ENCODE measurements at regions of chr3 and their contacts with region 1.

Region 1: GRCh38 chr3:62007036-62007818 is 366.1 kb downstream of the FEZF2 start:
- DNase-seq: no peak
- ATAC-seq: no peak
- H3K4me3 Mint-ChIP-seq: no peak overlapping the region
- H3K27ac Mint-ChIP-seq: no peak overlapping the region
- H3K4me1 Mint-ChIP-seq: no peaks in the 10 kb centered on the region
- H3K27me3 Mint-ChIP-seq: no peaks in the 10 kb centered on the region
- CTCF ChIP-seq: no peak

Region 2: DNA sequence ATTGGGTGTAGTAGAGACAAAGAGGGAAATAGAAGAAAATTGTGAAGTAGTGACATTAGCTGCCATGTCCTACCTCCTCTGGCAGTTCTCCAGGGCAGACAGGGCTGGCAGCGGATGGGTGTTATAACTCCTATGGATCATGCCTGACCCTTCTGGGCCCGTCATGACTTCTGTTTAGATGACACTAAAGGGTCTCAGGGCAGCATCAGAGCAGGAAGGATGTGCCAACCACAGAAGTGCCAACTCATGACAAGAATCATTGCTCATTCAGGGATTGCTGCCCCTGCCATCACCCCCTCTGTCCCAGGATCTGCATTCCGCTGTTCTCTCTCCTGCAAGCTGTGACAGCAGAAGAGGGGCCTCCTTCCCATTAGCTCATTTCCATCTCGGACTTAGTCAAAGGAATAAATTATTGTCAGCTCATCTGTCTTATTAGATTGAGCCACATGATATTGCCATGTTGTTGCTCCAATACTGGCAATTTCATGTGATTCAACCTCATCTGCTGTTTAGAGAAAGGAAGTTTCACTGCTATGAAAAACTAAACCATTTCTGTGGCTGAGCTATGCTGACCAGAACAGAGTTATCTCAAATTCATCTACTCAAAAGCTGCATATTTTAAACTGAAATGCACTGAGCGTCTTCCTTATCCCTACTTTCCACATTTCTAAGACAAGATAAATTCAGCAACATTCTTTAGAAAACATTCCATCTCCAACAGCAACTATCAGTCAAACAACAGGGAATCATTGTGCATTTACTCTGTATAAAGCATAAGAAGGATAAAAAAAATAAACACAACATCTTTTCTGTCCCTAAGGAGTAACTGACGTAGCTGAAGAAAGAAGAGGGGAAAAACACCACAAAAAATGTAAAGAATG is 1027.5 kb before region 1 on chr3:
- CTCF ChIA-PET with region 1: no interaction called
- POLR2A ChIA-PET with region 1: no interaction called
- intact Hi-C with region 1: loop called (anchors 10 kb)
- DNase-seq: no peak
- ATAC-seq: no peak
- H3K4me3 Mint-ChIP-seq: no peak overlapping the region
- H3K27ac Mint-ChIP-seq: no peak overlapping the region
- H3K4me1 Mint-ChIP-seq: peaks cover 3% of the 10 kb centered on the region
- H3K27me3 Mint-ChIP-seq: no peaks in the 10 kb centered on the region
- CTCF ChIP-seq: no peak

Region 3: GRCh38 chr3:61299343-61300005 is 707.8 kb before region 1 on chr3:
- CTCF ChIA-PET with region 1: no interaction called
- POLR2A ChIA-PET with region 1: no interaction called
- intact Hi-C with region 1: no loop called
- DNase-seq: no peak
- ATAC-seq: no peak
- H3K4me3 Mint-ChIP-seq: no peak overlapping the region
- H3K27ac Mint-ChIP-seq: no peak overlapping the region
- H3K4me1 Mint-ChIP-seq: no peaks in the 10 kb centered on the region
- H3K27me3 Mint-ChIP-seq: peaks cover 2% of the 10 kb centered on the region
- CTCF ChIP-seq: no peak

Region 4: GRCh38 chr3:61892891-61893290 is 114.3 kb before region 1 on chr3:
- CTCF ChIA-PET with region 1: no interaction called
- POLR2A ChIA-PET with region 1: no interaction called
- intact Hi-C with region 1: no loop called
- DNase-seq: no peak
- ATAC-seq: no peak
- H3K4me3 Mint-ChIP-seq: no peak overlapping the region
- H3K27ac Mint-ChIP-seq: no peak overlapping the region
- H3K4me1 Mint-ChIP-seq: peaks cover 14% of the 10 kb centered on the region
- H3K27me3 Mint-ChIP-seq: peaks cover 1% of the 10 kb centered on the region
- CTCF ChIP-seq: no peak

Measured in activated CD8-positive, alpha-beta T cell treated with anti-CD3 and anti-CD28 coated beads for 36 hours (primary cell).